Mammary epithelial cell (primary cell): ENCODE measurements at regions of chr9 and their contacts with region 1.

Region 1: DNA sequence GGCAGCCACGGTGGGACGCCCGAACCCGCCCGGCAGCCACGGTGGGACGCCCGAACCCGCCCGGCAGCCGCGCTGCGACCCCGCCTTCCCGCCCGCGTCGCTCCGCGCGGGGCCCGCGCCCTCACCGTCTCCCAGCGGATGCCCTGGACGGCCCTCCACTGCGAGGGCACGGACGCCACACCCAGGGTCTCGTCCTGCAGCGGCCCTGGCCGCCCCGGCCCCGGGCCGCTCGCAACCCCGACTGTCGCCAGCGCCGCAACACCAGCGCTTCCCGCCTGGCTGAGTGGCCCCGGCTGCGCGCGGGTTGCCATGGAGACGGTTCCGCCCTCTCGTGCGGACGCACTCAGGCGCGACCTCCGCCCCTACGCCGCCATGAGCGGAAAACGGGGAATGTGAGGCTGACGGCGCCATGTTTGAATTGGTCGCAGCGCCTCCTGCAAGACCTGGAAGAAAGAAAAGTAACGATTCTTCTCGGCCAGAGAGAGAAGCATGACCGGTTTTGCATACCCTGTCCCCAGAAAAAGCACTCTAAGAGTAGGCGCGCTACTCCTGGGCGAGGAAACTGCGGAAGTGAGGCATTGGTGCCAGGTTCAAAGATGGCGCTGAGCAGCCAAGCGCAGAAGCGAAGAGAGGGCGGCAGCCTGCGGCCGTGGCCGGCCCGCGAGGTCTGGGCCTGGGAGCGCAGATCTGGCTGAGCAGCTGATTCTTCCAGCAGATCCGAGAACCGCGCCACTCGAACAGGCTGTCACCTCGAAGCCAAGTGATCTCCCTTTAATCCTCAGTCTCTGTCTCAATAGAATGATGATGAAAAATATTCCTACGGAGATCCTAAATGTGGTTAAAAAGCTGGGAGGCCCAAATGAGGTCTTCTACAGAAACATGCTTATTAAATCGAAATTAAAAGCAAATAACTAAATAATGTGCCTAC is at the start of gene DYNC2I2:
- DNase-seq: peak; percentile 88
- H3K4me3 ChIP-seq: peak within 1 kb of the TSS; percentile 54 to 63 (median 56)
- H3K27ac ChIP-seq: peak within 1 kb of the TSS; percentile 97
- H3K4me1 ChIP-seq: peaks cover 5% of the 10 kb centered on the region
- H3K27me3 ChIP-seq: no peaks in the 10 kb centered on the region
- CTCF ChIP-seq: no peak
- total RNA-seq, gene DYNC2I2: 28.5 to 54.4 TPM

Region 2: GRCh38 chr9:128688512-128689292 is 32.0 kb after region 1 on chr9 and contains the start of gene SET:
- CTCF ChIA-PET with region 1: no interaction called
- dilution Hi-C with region 1: no loop called
- in situ Hi-C with region 1: no loop called
- intact Hi-C with region 1: loop called (anchors 2 kb)
- DNase-seq: peak; percentile 90
- H3K4me3 ChIP-seq: peak within 1 kb of the TSS; percentile 79 to 92 (median 81)
- H3K27ac ChIP-seq: peak within 1 kb of the TSS; percentile 58
- H3K4me1 ChIP-seq: peaks cover 35% of the 10 kb centered on the region
- H3K27me3 ChIP-seq: no peaks in the 10 kb centered on the region
- CTCF ChIP-seq: no peak
- total RNA-seq, gene SET: 282 to 484 TPM

Region 3: DNA sequence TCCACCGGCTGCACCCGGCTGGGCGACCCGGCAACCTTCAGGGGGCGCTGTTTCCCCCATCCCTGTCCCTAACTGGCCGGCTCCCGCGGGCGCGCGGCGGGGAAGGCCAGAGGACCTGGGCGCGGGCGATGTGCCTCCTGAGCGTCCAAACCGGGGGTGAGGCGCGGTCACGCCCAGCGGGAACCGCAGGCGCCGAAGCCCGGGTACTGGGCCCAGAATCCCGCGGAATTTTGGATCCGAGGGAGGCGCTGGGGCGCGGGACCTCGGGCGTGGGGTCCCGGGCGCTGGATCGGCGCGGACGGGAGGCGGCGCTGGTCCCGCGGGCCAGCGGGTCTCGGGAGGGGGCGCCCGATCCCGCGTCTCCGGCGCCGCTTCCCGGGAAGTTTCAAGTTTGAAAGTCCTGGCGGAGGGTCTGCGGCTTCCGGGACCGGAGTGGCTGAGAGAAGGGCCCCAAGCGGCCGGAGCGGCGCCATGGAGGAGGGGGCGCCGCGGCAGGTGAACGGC is 45.8 kb after region 1 on chr9 and contains the start of gene PKN3:
- CTCF ChIA-PET with region 1: interaction called, 10 read pairs
- dilution Hi-C with region 1: no loop called
- in situ Hi-C with region 1: no loop called
- intact Hi-C with region 1: loop called (anchors 5 kb)
- DNase-seq: peak; percentile 71
- H3K4me3 ChIP-seq: peak within 1 kb of the TSS; percentile 53 to 68 (median 55)
- H3K27ac ChIP-seq: peak within 1 kb of the TSS; percentile 4
- H3K4me1 ChIP-seq: peaks cover 7% of the 10 kb centered on the region
- H3K27me3 ChIP-seq: no peaks in the 10 kb centered on the region
- CTCF ChIP-seq: peak; percentile 60 to 77
- total RNA-seq, gene PKN3: 0.33 to 2.1 TPM

Region 4: GRCh38 chr9:128712451-128713410 is 56.1 kb after region 1 on chr9:
- CTCF ChIA-PET with region 1: no interaction called
- dilution Hi-C with region 1: no loop called
- in situ Hi-C with region 1: no loop called
- intact Hi-C with region 1: no loop called
- DNase-seq: no peak
- H3K4me3 ChIP-seq: no peak overlapping the region
- H3K27ac ChIP-seq: no peak overlapping the region
- H3K4me1 ChIP-seq: no peaks in the 10 kb centered on the region
- H3K27me3 ChIP-seq: no peaks in the 10 kb centered on the region
- CTCF ChIP-seq: no peak

Region 5: GRCh38 chr9:128818099-128818838 is 161.6 kb after region 1 on chr9 and contains the start of gene ENDOG:
- CTCF ChIA-PET with region 1: no interaction called
- dilution Hi-C with region 1: no loop called
- in situ Hi-C with region 1: no loop called
- intact Hi-C with region 1: loop called (anchors 2 kb)
- DNase-seq: peak; percentile 93
- H3K4me3 ChIP-seq: peak within 1 kb of the TSS; percentile 75 to 80 (median 76)
- H3K27ac ChIP-seq: peak within 1 kb of the TSS; percentile 41
- H3K4me1 ChIP-seq: peaks cover 16% of the 10 kb centered on the region
- H3K27me3 ChIP-seq: no peaks in the 10 kb centered on the region
- CTCF ChIP-seq: peak; percentile 96 to 99
- total RNA-seq, gene ENDOG: 30.8 to 40.3 TPM